Activated CD4-positive, alpha-beta T cell treated with anti-CD3 and anti-CD28 coated beads for 36 hours (primary cell): ENCODE measurements at regions of chr16 and their contacts with region 1.

Region 1: DNA sequence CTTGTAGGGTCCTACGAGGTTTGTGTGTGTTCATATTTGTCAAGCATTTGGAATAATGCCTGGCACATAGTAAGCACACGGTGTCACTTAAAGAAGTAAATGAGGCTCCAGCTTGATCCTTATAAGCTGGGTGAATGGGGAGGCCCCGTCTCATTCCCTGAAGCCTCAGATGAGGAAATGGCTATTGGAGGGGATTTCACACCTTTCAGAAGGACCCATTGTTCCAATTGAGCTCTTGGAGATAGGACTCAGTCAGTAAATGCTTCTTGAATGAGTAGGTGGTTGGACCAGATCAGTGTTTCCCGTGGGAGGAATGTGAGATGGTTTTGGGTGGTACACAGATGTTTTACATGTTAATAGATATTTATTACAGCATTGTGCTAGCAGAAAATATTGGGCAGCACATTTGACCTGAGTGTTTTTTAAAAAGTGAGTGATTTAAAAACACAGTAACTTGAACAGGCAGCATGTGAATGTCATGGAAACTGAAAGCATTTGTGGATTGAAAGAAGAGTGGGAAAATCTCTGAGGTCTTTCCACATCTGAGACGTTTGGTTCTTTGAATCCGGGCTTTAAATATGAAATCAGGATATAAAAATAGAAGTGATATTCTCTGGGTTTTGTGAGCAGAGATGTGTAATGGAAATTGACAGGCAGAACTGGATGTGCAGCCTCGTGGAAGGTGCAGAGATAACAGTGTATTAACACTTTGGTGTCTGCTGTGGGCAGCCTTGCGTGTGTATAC is 36.4 kb upstream of the ARHGAP17 start:
- DNase-seq: peak; percentile 46
- ATAC-seq: peak; percentile 30
- H3K4me3 Mint-ChIP-seq: peak overlapping the region; percentile 59
- H3K27ac Mint-ChIP-seq: peak overlapping the region; percentile 87
- H3K4me1 Mint-ChIP-seq: peaks cover 60% of the 10 kb centered on the region
- H3K27me3 Mint-ChIP-seq: no peaks in the 10 kb centered on the region

Region 2: DNA sequence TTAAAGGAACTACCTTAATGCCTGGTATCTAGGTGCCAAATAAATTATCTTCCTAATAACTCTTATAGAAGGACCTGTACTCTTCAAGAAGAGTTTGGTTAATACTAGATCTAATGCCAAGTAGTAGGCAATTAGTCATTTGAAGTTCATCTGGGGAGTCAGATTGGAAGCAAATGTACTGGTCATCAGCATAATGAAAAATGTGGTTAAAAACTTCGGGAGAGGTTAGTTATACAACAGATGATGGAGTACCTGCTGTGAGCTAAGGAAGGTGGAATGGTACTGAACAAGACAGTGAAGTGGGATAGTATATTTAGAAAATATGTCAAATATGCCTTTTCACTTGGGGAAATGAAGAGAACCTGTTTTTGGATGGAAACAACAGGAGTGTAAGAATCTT is 272.9 kb before region 1 on chr16:
- CTCF ChIA-PET with region 1: no interaction called
- POLR2A ChIA-PET with region 1: no interaction called
- intact Hi-C with region 1: no loop called
- DNase-seq: no peak
- ATAC-seq: no peak
- H3K4me3 Mint-ChIP-seq: no peak overlapping the region
- H3K27ac Mint-ChIP-seq: peak overlapping the region; percentile 47
- H3K4me1 Mint-ChIP-seq: peaks cover 15% of the 10 kb centered on the region
- H3K27me3 Mint-ChIP-seq: no peaks in the 10 kb centered on the region

Region 3: DNA sequence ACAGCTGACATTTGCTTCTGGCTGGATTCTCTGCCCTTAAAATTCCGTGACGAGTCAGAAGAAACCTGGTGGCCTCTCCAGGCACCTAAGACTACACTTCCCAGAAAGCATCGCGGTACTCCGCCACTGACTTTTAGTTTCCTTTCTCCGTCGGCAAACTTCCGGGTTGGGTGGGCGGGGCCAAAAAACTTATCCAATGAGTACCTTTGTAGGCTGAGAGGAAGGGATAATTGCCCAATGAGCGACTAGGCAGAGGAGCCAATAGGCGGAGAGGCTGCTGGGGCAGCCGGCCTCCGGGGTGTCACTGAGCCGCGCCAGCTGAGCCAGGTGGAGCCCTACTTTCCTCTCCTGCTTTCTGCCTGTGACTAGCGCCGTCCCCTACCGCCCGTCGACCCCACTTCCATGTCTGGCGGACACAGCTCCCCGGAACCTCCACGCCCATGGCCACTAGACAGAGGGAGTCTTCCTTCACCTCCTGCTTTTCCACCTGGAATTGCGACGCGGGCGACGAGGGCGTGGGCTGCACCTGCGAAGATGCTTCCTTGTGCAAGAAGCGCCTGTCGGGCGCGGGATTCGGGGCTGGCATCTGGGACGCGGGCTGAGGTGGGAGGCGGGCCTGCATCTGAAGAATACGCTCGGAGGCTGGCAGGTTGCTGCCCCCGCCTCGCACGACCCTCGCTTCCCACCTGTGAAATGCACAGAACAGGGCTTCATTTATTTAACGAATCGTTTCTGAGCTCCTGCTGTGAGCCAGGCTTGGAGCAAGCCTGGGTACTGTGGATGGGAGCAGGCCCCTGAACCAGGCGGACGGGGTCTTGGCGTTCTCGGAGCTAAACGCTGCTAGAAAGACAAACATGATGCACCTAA is 19.9 kb before region 1 on chr16:
- CTCF ChIA-PET with region 1: interaction called, 3 read pairs
- POLR2A ChIA-PET with region 1: interaction called, 3 read pairs
- intact Hi-C with region 1: loop called (anchors 1 kb)
- DNase-seq: peak; percentile 93
- ATAC-seq: peak; percentile 97
- H3K4me3 Mint-ChIP-seq: peak overlapping the region; percentile 75
- H3K27ac Mint-ChIP-seq: peak overlapping the region; percentile 100
- H3K4me1 Mint-ChIP-seq: peaks cover 46% of the 10 kb centered on the region
- H3K27me3 Mint-ChIP-seq: no peaks in the 10 kb centered on the region

Region 4: DNA sequence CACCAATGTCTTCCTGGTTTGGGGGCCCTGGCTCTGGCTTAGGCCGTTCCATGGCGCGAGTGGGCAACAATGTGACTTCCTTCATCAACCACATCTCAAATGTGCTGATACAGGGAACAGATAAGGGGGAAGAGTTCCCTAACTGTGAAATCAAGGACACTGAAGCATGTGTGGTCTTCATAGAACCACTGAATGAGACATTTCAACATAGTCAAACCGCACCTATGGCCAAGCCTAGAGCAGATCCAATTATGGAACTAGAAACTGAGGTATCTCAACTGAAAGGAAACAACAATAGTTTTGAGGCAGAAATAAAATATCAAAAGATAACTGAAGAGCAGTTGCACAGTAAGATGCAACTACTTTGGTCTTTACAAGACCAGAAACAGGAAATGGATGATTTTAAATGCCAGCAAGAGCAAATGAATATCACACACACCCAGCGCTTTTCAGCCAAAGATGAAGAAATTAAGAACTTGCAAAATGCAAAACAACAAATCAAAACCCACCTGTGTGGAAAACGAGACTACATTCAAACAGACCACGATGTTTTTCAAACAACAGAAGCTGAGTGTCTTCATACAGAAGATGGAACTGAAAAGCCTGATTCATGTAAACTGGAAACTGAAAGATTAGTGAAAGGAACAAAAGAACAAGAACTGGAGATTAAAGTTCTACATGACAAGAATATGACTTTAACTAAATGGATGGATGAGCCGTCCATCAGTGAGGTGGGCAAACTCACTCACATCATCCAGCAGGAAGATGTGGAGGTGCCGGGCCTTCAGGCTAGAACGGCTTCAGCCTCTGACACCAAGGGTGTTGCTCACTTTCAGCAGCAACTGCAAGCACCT is 41.9 kb after region 1 on chr16:
- CTCF ChIA-PET with region 1: no interaction called
- POLR2A ChIA-PET with region 1: no interaction called
- intact Hi-C with region 1: loop called in 1 of 2 experiments (anchors 1 kb)
- DNase-seq: peak; percentile 42
- ATAC-seq: peak; percentile 79
- H3K4me3 Mint-ChIP-seq: peak overlapping the region; percentile 17
- H3K27ac Mint-ChIP-seq: peak overlapping the region; percentile 90
- H3K4me1 Mint-ChIP-seq: peaks cover 28% of the 10 kb centered on the region
- H3K27me3 Mint-ChIP-seq: no peaks in the 10 kb centered on the region

Region 5: GRCh38 chr16:25126820-25127232 is 75.2 kb after region 1 on chr16:
- CTCF ChIA-PET with region 1: interaction called, 5 read pairs
- POLR2A ChIA-PET with region 1: no interaction called
- intact Hi-C with region 1: loop called (anchors 1 kb)
- DNase-seq: peak; percentile 78
- ATAC-seq: peak; percentile 90
- H3K4me3 Mint-ChIP-seq: no peak overlapping the region
- H3K27ac Mint-ChIP-seq: peak overlapping the region; percentile 45
- H3K4me1 Mint-ChIP-seq: peaks cover 34% of the 10 kb centered on the region
- H3K27me3 Mint-ChIP-seq: no peaks in the 10 kb centered on the region

Region 6: DNA sequence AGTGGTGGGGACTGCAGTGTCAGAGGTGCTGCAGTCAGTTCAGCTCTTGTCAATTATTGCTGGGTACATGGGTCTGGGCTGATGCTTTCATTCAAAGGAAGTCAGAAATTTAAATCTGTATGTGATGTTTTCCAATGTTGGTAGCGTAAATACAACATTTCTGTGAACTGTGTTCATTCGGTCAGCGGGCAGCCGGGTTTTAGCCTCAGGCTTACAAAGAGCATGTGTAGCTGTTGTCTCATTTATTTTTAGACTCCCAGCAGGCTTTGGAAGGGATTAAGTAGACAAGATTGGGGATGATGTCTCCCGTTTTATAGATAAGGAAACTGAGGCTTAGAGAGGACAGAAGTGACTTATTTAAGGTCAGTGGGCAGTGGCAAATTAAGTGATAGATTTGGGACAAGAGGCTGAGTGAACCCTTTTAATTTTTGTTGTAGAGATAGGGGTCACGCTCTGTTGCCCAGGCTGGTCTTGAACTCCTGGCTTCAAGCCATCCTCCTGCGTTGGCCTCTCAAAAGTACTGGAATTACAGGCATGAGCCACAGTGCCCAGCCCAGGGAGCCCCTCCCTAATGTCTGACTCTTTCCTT is 173.2 kb after region 1 on chr16:
- CTCF ChIA-PET with region 1: interaction called, 4 read pairs
- POLR2A ChIA-PET with region 1: no interaction called
- intact Hi-C with region 1: loop called (anchors 1 kb)
- DNase-seq: no peak
- ATAC-seq: no peak
- H3K4me3 Mint-ChIP-seq: no peak overlapping the region
- H3K27ac Mint-ChIP-seq: no peak overlapping the region
- H3K4me1 Mint-ChIP-seq: peaks cover 2% of the 10 kb centered on the region
- H3K27me3 Mint-ChIP-seq: no peaks in the 10 kb centered on the region

Region 7: GRCh38 chr16:25464038-25464437 is 412.5 kb after region 1 on chr16:
- CTCF ChIA-PET with region 1: no interaction called
- POLR2A ChIA-PET with region 1: no interaction called
- intact Hi-C with region 1: no loop called
- DNase-seq: no peak
- ATAC-seq: no peak
- H3K4me3 Mint-ChIP-seq: no peak overlapping the region
- H3K27ac Mint-ChIP-seq: no peak overlapping the region
- H3K4me1 Mint-ChIP-seq: no peaks in the 10 kb centered on the region
- H3K27me3 Mint-ChIP-seq: peaks cover 11% of the 10 kb centered on the region